ENCODE measurements at regions of chr9 and their contacts with region 1.

Region 1: DNA sequence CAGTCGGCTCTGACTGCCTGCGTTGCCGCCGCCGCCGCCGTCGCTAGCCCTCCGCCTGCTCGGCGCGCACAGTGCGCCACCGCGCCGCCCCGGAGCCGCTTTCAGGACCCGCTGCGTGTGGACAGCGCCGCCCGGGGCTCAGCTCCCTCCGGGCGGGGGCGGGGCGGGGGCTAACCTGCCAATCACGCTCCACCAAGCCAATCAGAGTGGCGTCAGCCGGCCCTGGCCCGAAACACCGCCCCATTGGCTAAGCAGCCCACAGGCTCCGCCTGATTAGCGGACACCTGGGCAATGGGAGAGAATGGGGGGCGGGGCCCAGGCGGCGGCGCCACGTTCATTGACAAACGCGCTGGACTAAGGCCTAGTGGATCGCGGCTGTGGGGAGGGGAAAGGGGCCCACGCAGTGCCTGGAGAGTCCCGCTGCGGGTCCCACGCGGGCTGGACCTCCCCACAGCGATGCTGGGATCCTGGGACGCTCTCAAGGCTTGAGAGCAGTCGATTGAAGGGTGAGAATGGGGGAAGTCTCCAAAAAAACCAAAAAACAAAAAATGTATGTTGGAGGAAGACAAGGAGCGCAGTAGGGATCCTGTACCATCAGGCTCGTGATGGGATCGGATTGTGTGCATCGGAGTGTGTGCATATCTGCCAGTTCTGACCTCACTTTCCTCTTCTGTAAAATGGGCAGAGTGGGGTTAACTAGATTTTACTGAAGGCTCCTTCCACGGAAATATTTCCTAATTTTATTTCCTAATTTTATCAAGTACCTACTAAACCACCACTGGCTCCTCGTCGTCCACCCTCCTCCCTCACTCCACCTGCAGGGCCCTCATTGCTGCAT is 6.3 kb downstream of the PAX5 start:
- DNase-seq: peak; percentile 99
- ATAC-seq: peak; percentile 84
- H3K4me3 ChIP-seq: peak overlapping the region; percentile 5 to 95 (median 86)
- H3K4me3 Mint-ChIP-seq: peak overlapping the region; percentile 89
- H3K27ac ChIP-seq: peak overlapping the region; percentile 98 to 100
- H3K27ac Mint-ChIP-seq: peak overlapping the region; percentile 96
- H3K4me1 ChIP-seq: peaks cover 62 to 81% of the 10 kb centered on the region in 2 donors
- H3K4me1 Mint-ChIP-seq: peaks cover 78% of the 10 kb centered on the region
- H3K27me3 ChIP-seq: no peaks in the 10 kb centered on the region
- H3K27me3 Mint-ChIP-seq: no peaks in the 10 kb centered on the region
- CTCF ChIP-seq: no peak

Region 2: GRCh38 chr9:36748322-36748899 is 279.4 kb before region 1 on chr9:
- CTCF ChIA-PET with region 1: no interaction called
- POLR2A ChIA-PET with region 1: no interaction called
- intact Hi-C with region 1: no loop called
- DNase-seq: peak; percentile 43
- ATAC-seq: peak; percentile 31
- H3K4me3 ChIP-seq: no peak overlapping the region
- H3K4me3 Mint-ChIP-seq: no peak overlapping the region
- H3K27ac ChIP-seq: no peak overlapping the region
- H3K27ac Mint-ChIP-seq: no peak overlapping the region
- H3K4me1 ChIP-seq: peaks cover 0 to 5% of the 10 kb centered on the region in 2 donors
- H3K4me1 Mint-ChIP-seq: peaks cover 2% of the 10 kb centered on the region
- H3K27me3 ChIP-seq: peaks cover 0 to 43% (median 17%) of the 10 kb centered on the region in 4 experiments
- H3K27me3 Mint-ChIP-seq: peaks cover 52% of the 10 kb centered on the region
- CTCF ChIP-seq: no peak

Region 3: GRCh38 chr9:36847781-36848673 is 179.8 kb before region 1 on chr9:
- CTCF ChIA-PET with region 1: no interaction called
- POLR2A ChIA-PET with region 1: no interaction called
- intact Hi-C with region 1: no loop called
- DNase-seq: no peak
- ATAC-seq: no peak
- H3K4me3 ChIP-seq: no peak overlapping the region
- H3K4me3 Mint-ChIP-seq: no peak overlapping the region
- H3K27ac ChIP-seq: no peak overlapping the region
- H3K27ac Mint-ChIP-seq: peak overlapping the region; percentile 41
- H3K4me1 ChIP-seq: no peaks in the 10 kb centered on the region
- H3K4me1 Mint-ChIP-seq: no peaks in the 10 kb centered on the region
- H3K27me3 ChIP-seq: no peaks in the 10 kb centered on the region
- H3K27me3 Mint-ChIP-seq: no peaks in the 10 kb centered on the region
- CTCF ChIP-seq: no peak

Region 4: DNA sequence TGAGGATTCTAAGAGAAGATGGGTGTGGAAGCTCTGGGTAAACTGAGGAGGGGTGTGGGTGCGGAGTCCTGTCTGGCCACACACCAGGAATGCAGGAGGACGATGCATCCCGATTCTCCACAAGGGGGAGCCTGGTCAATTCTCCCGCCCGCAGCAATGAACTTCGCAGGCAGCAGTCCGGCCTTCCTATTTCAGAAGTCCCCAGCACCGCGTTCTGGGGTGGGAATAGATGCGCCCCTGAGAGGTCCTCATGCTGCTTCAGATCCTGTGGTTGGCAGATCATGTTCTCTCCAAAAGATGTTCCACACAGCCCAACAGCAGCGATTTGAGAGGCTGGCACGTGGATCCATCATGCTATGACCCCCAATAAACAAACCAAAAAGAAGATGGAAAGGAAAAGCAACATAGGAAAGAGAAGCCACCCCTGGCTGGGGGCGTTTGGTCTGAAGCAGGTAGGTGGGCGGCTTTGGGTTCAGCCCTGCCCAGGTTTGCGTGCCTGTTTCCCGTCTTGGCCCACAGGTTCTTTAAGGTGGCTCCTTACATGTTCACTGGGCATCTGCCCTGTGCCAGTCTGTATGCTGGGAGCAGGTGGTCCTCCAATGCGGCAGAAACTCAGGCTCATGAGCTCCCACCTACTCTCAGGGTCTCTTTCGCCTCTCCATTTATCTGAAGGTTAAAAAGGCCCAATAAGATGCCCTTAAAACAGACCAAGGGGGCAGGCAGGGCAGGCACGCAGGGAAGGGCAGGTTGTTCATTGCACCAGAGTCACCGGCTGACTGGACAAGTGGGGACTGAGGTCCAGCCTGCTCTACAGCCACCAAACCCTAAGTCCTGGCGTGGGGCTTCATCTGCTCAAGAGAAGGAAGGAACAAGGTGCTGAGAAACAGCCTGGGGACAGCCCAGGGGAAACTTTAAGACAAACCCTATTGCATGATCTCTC is 165.3 kb before region 1 on chr9:
- CTCF ChIA-PET with region 1: no interaction called
- POLR2A ChIA-PET with region 1: no interaction called
- intact Hi-C with region 1: no loop called
- DNase-seq: no peak
- ATAC-seq: no peak
- H3K4me3 ChIP-seq: no peak overlapping the region
- H3K4me3 Mint-ChIP-seq: no peak overlapping the region
- H3K27ac ChIP-seq: no peak overlapping the region
- H3K27ac Mint-ChIP-seq: peak overlapping the region; percentile 75
- H3K4me1 ChIP-seq: peaks cover 4 to 34% of the 10 kb centered on the region in 2 donors
- H3K4me1 Mint-ChIP-seq: peaks cover 49% of the 10 kb centered on the region
- H3K27me3 ChIP-seq: no peaks in the 10 kb centered on the region
- H3K27me3 Mint-ChIP-seq: no peaks in the 10 kb centered on the region
- CTCF ChIP-seq: no peak

Region 5: GRCh38 chr9:37004424-37004935 is 23.3 kb before region 1 on chr9:
- CTCF ChIA-PET with region 1: interaction called, 162 read pairs
- POLR2A ChIA-PET with region 1: interaction called, 57 read pairs
- intact Hi-C with region 1: loop called (anchors 1 kb)
- DNase-seq: peak; percentile 78
- ATAC-seq: peak; percentile 46
- H3K4me3 ChIP-seq: peak overlapping the region; percentile 28 to 77 (median 61)
- H3K4me3 Mint-ChIP-seq: peak overlapping the region; percentile 75
- H3K27ac ChIP-seq: peak overlapping the region; percentile 77 to 83
- H3K27ac Mint-ChIP-seq: peak overlapping the region; percentile 99
- H3K4me1 ChIP-seq: peaks cover 97% of the 10 kb centered on the region in 2 donors
- H3K4me1 Mint-ChIP-seq: peaks cover 93% of the 10 kb centered on the region
- H3K27me3 ChIP-seq: no peaks in the 10 kb centered on the region
- H3K27me3 Mint-ChIP-seq: no peaks in the 10 kb centered on the region
- CTCF ChIP-seq: no peak

Region 6: DNA sequence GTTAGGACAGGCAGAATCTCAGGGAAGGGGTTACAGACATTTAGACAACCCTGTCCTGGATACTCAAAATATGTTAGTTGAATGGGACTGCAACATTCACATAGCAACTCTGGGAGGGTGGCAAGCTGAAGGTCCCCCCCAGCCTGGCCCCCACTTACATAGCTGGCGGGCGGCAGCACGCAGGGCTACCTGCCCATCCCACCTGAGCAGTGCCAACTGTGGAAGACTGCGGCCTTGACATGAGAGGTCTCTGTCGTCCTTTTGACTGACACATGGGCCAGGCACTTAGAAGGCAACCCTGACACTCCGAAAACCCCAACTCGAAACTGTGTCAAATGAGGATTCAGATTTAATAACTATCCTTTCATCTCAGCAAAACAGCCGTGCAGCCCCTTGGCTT is 10.3 kb before region 1 on chr9:
- CTCF ChIA-PET with region 1: interaction called, 5 read pairs
- POLR2A ChIA-PET with region 1: interaction called, 5 read pairs
- intact Hi-C with region 1: loop called (anchors 1 kb)
- DNase-seq: no peak
- ATAC-seq: no peak
- H3K4me3 ChIP-seq: no peak overlapping the region
- H3K4me3 Mint-ChIP-seq: no peak overlapping the region
- H3K27ac ChIP-seq: peak overlapping the region in 1 of 2 donors; percentile 77
- H3K27ac Mint-ChIP-seq: peak overlapping the region; percentile 86
- H3K4me1 ChIP-seq: peaks cover 52 to 63% of the 10 kb centered on the region in 2 donors
- H3K4me1 Mint-ChIP-seq: peaks cover 87% of the 10 kb centered on the region
- H3K27me3 ChIP-seq: no peaks in the 10 kb centered on the region
- H3K27me3 Mint-ChIP-seq: no peaks in the 10 kb centered on the region
- CTCF ChIP-seq: no peak

Region 7: DNA sequence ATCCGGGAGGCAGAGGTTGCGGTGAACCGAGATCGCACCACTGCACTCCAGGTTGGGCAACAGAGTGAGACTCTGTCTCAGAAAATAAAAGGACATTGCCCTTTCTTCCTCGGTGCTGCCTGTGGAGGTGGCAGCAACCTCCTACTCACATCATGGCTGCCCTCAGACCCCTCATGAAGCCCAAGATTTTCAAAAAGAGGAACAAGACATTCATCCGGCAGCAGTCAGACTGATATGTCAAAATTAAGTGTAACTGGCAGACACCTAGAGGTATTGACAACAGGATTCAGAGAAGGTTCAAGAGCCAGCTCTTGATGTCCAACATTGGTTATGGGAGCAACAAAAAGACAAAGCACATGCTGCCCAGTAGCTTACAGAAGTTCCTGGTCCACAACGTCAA is 18.9 kb after region 1 on chr9:
- CTCF ChIA-PET with region 1: no interaction called
- POLR2A ChIA-PET with region 1: no interaction called
- intact Hi-C with region 1: no loop called
- DNase-seq: no peak
- ATAC-seq: peak; percentile 51
- H3K4me3 ChIP-seq: no peak overlapping the region
- H3K4me3 Mint-ChIP-seq: no peak overlapping the region
- H3K27ac ChIP-seq: no peak overlapping the region
- H3K27ac Mint-ChIP-seq: peak overlapping the region; percentile 11
- H3K4me1 ChIP-seq: peaks cover 7 to 9% of the 10 kb centered on the region in 2 donors
- H3K4me1 Mint-ChIP-seq: peaks cover 26% of the 10 kb centered on the region
- H3K27me3 ChIP-seq: no peaks in the 10 kb centered on the region
- H3K27me3 Mint-ChIP-seq: no peaks in the 10 kb centered on the region
- CTCF ChIP-seq: no peak

Region 8: DNA sequence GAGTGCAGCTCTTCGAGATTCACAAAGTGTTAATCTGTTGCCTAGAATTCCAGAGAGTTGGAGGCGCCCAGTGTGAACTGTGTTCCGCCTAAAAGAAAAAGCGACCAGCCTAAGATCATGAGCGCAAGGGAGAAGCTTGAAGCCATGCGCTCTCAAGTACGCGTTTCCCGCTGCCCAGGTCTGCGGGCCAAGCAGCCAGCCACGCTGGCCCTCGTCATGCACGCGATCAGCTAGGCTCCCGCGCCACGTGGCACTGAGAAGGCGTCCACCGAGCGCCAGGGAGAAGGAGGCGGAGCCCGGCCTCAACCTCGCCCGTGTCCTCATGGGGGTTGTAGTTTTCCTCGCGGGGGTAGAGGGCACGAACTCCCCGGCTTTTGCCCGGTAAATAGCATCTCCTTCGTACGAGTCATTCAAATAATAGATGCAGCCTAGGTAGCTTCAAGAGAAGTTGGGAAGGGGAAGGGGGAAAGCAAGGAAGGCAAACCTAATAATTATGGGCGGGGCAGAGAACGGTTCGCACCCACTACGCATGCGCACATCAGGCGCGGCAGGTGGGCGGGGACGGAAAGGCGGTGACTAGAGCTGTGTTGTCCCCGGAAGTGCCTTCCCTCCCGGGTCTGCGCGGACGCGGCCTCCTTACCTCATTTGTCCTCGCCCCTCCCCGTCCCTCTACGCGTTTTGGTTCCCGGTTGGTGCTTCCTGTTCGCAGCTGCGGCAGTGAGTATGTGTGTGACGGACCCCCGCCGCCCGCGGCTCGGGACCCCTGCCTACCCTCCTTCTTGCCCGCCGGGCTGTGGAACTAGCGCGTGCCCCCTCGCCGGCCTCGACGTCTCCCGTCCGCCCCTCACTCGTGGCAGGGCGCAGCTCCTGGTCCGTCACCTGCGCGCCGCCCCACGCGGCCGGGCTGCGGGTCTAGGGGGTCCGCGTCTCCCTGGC is 92.4 kb after region 1 on chr9 and contains the start of gene ZCCHC7:
- CTCF ChIA-PET with region 1: interaction called, 3 read pairs
- POLR2A ChIA-PET with region 1: interaction called, 6 read pairs
- intact Hi-C with region 1: loop called (anchors 1 kb)
- DNase-seq: peak; percentile 98
- ATAC-seq: peak; percentile 92
- H3K4me3 ChIP-seq: peak within 1 kb of the TSS; percentile 80 to 97 (median 94)
- H3K4me3 Mint-ChIP-seq: peak within 1 kb of the TSS; percentile 100
- H3K27ac ChIP-seq: peak within 1 kb of the TSS; percentile 93 to 98
- H3K27ac Mint-ChIP-seq: peak within 1 kb of the TSS; percentile 100
- H3K4me1 ChIP-seq: peaks cover 36 to 44% of the 10 kb centered on the region in 2 donors
- H3K4me1 Mint-ChIP-seq: peaks cover 44% of the 10 kb centered on the region
- H3K27me3 ChIP-seq: no peaks in the 10 kb centered on the region
- H3K27me3 Mint-ChIP-seq: no peaks in the 10 kb centered on the region
- CTCF ChIP-seq: no peak
- total RNA-seq, gene ZCCHC7: 81.9 and 83.5 TPM in 2 replicates

Region 9: GRCh38 chr9:37324261-37324683 is 296.5 kb after region 1 on chr9:
- CTCF ChIA-PET with region 1: interaction called, 28 read pairs
- POLR2A ChIA-PET with region 1: interaction called, 4 read pairs
- intact Hi-C with region 1: no loop called
- DNase-seq: peak; percentile 90
- ATAC-seq: peak; percentile 84
- H3K4me3 ChIP-seq: peak overlapping the region in 2 of 5 experiments; percentile 7 to 31
- H3K4me3 Mint-ChIP-seq: peak overlapping the region; percentile 76
- H3K27ac ChIP-seq: peak overlapping the region; percentile 97 to 98
- H3K27ac Mint-ChIP-seq: peak overlapping the region; percentile 100
- H3K4me1 ChIP-seq: peaks cover 43 to 78% of the 10 kb centered on the region in 2 donors
- H3K4me1 Mint-ChIP-seq: peaks cover 62% of the 10 kb centered on the region
- H3K27me3 ChIP-seq: no peaks in the 10 kb centered on the region
- H3K27me3 Mint-ChIP-seq: no peaks in the 10 kb centered on the region
- CTCF ChIP-seq: no peak

Region 10: DNA sequence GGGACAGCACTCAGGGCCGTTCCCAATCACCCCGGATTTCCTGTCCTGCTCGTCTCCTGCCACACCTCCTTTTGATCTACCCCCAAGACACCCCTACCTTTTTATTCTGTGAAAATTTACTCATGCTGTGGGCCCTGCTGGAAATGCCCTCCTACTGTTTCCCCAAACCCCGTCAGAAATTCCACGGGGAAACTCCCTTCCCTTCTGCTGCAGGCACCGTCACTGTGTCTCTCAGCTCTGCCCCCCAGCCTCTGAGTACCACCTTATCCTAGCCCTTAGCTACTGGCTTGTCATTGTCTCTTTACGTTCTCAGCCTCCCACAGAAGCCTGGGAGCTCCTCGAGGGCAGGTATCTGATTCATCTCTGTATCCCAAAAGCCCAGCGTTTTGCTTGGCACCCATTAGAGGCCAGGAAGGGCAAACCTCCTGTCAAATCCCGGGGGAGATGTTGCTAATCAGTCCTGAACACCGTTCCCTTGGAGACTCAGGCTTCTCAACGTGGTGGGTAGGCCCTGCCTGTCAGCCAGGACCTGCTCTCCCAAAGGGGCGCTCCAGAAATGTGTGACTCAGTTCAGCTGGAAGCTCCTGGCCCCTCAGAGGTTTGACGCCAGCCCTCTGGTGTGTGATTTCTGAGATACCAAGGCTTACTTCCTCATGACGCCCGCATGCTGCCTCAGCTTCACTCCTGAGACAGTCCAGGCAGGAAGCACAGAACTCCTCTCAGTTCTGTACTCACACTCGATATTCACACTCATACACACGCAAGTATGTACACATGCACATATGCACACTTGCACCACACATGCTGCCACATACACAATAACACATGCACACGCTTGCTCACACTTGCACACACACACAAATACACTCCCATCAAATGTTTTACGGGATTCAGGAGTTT is 344.0 kb after region 1 on chr9:
- CTCF ChIA-PET with region 1: no interaction called
- POLR2A ChIA-PET with region 1: no interaction called
- intact Hi-C with region 1: loop called (anchors 2 kb)
- DNase-seq: peak; percentile 74
- ATAC-seq: peak; percentile 4
- H3K4me3 ChIP-seq: peak overlapping the region in 2 of 5 experiments; percentile 25 to 38
- H3K4me3 Mint-ChIP-seq: peak overlapping the region; percentile 70
- H3K27ac ChIP-seq: peak overlapping the region; percentile 78 to 94
- H3K27ac Mint-ChIP-seq: peak overlapping the region; percentile 88
- H3K4me1 ChIP-seq: peaks cover 95 to 100% of the 10 kb centered on the region in 2 donors
- H3K4me1 Mint-ChIP-seq: peaks cover 88% of the 10 kb centered on the region
- H3K27me3 ChIP-seq: no peaks in the 10 kb centered on the region
- H3K27me3 Mint-ChIP-seq: no peaks in the 10 kb centered on the region
- CTCF ChIP-seq: no peak

Measured in B cell (primary cell).